Activated CD4-positive, alpha-beta memory T cell treated with anti-CD3 and anti-CD28 coated beads for 36 hours (primary cell): ENCODE measurements at regions of chr7 and their contacts with region 1.

Region 1: GRCh38 chr7:3106361-3106826 is 62.7 kb upstream of the CARD11 start:
- DNase-seq: peak; percentile 80
- H3K4me3 Mint-ChIP-seq: no peak overlapping the region
- H3K27ac Mint-ChIP-seq: peak overlapping the region; percentile 84
- H3K4me1 Mint-ChIP-seq: peaks cover 70% of the 10 kb centered on the region
- H3K27me3 Mint-ChIP-seq: no peaks in the 10 kb centered on the region

Region 2: DNA sequence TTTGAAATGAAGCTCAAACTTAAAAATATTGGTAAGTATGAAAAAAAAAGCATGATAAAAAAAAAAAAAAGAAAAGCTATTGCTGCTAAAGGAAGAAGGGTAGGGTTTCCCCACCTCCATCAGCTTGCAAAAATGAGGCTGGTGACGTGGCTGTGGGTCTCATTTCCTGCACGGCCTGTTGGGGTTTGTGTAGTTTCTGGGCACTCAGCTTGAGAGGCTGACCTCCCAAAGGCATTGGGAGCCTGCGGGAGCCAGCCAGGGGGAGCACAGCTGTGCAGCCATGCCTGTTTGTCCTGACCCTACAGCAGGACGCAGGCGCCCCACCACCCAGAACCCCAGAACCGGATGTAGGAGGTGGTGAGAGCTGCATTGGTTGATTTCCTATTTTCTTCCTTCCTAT is 13.9 kb before region 1 on chr7:
- CTCF ChIA-PET with region 1: interaction called, 11 read pairs
- POLR2A ChIA-PET with region 1: interaction called, 14 read pairs
- intact Hi-C with region 1: loop called (anchors 1 kb)
- DNase-seq: peak; percentile 91
- H3K4me3 Mint-ChIP-seq: peak overlapping the region; percentile 27
- H3K27ac Mint-ChIP-seq: peak overlapping the region; percentile 89
- H3K4me1 Mint-ChIP-seq: peaks cover 70% of the 10 kb centered on the region
- H3K27me3 Mint-ChIP-seq: no peaks in the 10 kb centered on the region